ENCODE measurements at regions of chr15 and their contacts with region 1.

Region 1: GRCh38 chr15:74584779-74585178 is 30.9 kb upstream of the CLK3 start:
- DNase-seq: no peak
- H3K4me3 ChIP-seq: no peak overlapping the region
- H3K27ac ChIP-seq: no peak overlapping the region
- H3K4me1 ChIP-seq: peaks cover 14% of the 10 kb centered on the region
- H3K27me3 ChIP-seq: no peaks in the 10 kb centered on the region
- CTCF ChIP-seq: no peak

Region 2: GRCh38 chr15:74531144-74531811 is 53.5 kb before region 1 on chr15:
- CTCF ChIA-PET with region 1: no interaction called
- POLR2A ChIA-PET with region 1: no interaction called
- intact Hi-C with region 1: no loop called
- DNase-seq: peak; percentile 77 to 97
- H3K4me3 ChIP-seq: peak overlapping the region; percentile 32; the same call in 1 of the 2 replicates
- H3K27ac ChIP-seq: peak overlapping the region; percentile 90
- H3K4me1 ChIP-seq: peaks cover 36% of the 10 kb centered on the region
- H3K27me3 ChIP-seq: no peaks in the 10 kb centered on the region
- CTCF ChIP-seq: no peak

Region 3: DNA sequence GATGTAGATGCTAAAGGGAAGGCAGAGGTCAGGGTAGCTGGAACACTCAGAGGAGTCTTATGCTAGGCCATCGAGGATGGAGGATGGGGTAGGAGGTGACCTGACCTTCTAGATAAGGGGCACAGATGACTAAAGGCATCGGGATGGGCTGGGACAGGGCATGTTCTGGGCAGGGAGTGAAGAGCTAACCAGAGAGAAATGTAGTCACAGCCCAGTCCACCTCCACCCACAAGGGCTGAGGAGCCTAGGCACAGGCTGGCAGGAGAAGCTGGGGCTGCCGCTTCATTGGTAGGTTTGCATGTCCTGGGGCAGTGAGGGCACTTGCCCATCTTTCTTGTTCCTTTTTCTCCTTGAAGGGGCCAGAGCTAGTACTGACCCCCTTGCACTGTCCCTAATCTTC is 43.4 kb after region 1 on chr15:
- CTCF ChIA-PET with region 1: no interaction called
- POLR2A ChIA-PET with region 1: interaction called, 18 read pairs
- intact Hi-C with region 1: no loop called
- DNase-seq: no peak
- H3K4me3 ChIP-seq: no peak overlapping the region
- H3K27ac ChIP-seq: no peak overlapping the region
- H3K4me1 ChIP-seq: no peaks in the 10 kb centered on the region
- H3K27me3 ChIP-seq: no peaks in the 10 kb centered on the region
- CTCF ChIP-seq: no peak